Activated CD4-positive, alpha-beta memory T cell treated with anti-CD3 and anti-CD28 coated beads, Interleukin-2, amount 10 ng/mL, durations not matched to agents 7 days and 5 days (primary cell): ENCODE measurements at regions of chr15 and their contacts with region 1.

Region 1: GRCh38 chr15:64430000-64430735 is 30.2 kb upstream of the ZNF609 start:
- DNase-seq: peak; percentile 57
- H3K4me3 Mint-ChIP-seq: peak overlapping the region; percentile 31
- H3K27ac Mint-ChIP-seq: peak overlapping the region; percentile 90
- H3K4me1 Mint-ChIP-seq: peaks cover 37% of the 10 kb centered on the region
- H3K27me3 Mint-ChIP-seq: no peaks in the 10 kb centered on the region

Region 2: GRCh38 chr15:64443747-64444621 is 13.8 kb after region 1 on chr15:
- CTCF ChIA-PET with region 1: no interaction called
- POLR2A ChIA-PET with region 1: interaction called, 17 read pairs
- DNase-seq: no peak
- H3K4me3 Mint-ChIP-seq: peak overlapping the region; percentile 11
- H3K27ac Mint-ChIP-seq: peak overlapping the region; percentile 70
- H3K4me1 Mint-ChIP-seq: peaks cover 47% of the 10 kb centered on the region
- H3K27me3 Mint-ChIP-seq: no peaks in the 10 kb centered on the region

Region 3: DNA sequence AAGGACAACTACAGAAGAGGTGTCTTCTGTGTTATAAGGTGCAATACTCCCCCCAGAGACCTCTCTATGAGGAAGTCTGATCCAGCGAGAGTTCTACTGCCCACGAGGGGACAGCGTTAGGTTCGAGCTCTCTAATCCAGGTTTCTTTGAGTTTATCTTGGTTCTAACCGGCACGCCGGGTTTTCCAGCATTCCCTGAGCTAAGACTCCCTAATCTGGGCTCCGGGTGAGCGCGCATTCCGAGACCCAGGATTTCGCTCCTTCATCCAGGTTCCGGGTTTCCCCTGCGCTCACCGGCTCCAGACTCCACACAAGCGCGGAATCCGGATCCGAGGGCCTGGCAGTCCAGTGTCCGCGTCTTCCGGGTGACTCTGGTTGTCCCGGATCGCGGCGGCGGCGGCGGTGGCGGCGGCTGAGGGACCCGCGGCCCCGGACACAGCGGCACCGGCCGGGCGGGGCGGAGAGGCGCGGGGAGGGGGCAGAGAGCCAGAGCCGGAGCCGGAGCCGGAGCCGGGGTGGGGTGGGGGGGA is 30.1 kb after region 1 on chr15 and contains the start of gene ZNF609:
- CTCF ChIA-PET with region 1: interaction called, 3 read pairs
- POLR2A ChIA-PET with region 1: interaction called, 11 read pairs
- DNase-seq: peak; percentile 89
- H3K4me3 Mint-ChIP-seq: peak within 1 kb of the TSS; percentile 87
- H3K27ac Mint-ChIP-seq: peak within 1 kb of the TSS; percentile 72
- H3K4me1 Mint-ChIP-seq: peaks cover 42% of the 10 kb centered on the region
- H3K27me3 Mint-ChIP-seq: no peaks in the 10 kb centered on the region
- total RNA-seq, gene ZNF609: 30.0 to 34.1 TPM

Region 4: DNA sequence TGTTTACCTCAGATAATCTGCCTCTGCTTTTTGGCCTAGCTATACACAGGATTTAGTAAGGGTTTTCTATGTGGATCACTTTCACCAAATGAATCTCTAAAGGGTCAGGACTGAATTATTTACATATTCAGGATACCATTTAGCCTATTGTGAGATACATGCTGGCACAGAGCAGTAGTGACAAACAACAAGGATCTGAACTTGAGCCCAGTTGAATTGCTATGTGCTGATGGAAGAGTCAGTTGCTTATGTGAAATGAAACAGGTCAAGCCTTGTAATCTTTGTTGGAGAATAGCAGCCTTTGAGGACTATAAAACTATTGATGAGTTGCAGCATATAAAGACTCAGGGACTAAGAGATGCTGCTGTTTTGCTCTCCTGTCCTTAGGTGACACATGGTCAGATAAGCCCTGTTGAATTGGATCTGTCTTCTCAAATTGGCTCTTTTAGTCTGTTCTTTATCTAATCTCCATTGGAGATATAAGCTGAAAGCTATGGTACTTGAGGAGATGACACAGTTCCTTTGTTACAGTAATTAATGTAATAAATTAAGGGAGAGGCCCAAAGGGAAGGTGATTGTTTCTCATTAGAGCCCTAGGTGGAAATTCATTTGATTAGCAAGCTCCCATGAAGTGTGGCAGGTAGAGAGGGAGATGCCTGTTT is 60.6 kb after region 1 on chr15:
- CTCF ChIA-PET with region 1: no interaction called
- POLR2A ChIA-PET with region 1: no interaction called
- DNase-seq: no peak
- H3K4me3 Mint-ChIP-seq: no peak overlapping the region
- H3K27ac Mint-ChIP-seq: no peak overlapping the region
- H3K4me1 Mint-ChIP-seq: no peaks in the 10 kb centered on the region
- H3K27me3 Mint-ChIP-seq: no peaks in the 10 kb centered on the region

Region 5: GRCh38 chr15:64552281-64552948 is 122.2 kb after region 1 on chr15:
- CTCF ChIA-PET with region 1: no interaction called
- POLR2A ChIA-PET with region 1: no interaction called
- DNase-seq: no peak
- H3K4me3 Mint-ChIP-seq: no peak overlapping the region
- H3K27ac Mint-ChIP-seq: no peak overlapping the region
- H3K4me1 Mint-ChIP-seq: peaks cover 2% of the 10 kb centered on the region
- H3K27me3 Mint-ChIP-seq: no peaks in the 10 kb centered on the region

Region 6: GRCh38 chr15:64651573-64652260 is 221.5 kb after region 1 on chr15:
- CTCF ChIA-PET with region 1: interaction called, 51 read pairs
- POLR2A ChIA-PET with region 1: interaction called, 6 read pairs
- DNase-seq: peak; percentile 29
- H3K4me3 Mint-ChIP-seq: no peak overlapping the region
- H3K27ac Mint-ChIP-seq: peak overlapping the region; percentile 61
- H3K4me1 Mint-ChIP-seq: peaks cover 19% of the 10 kb centered on the region
- H3K27me3 Mint-ChIP-seq: no peaks in the 10 kb centered on the region